Left cardiac atrium (tissue), 4 donors: ENCODE measurements at regions of chr3 and their contacts with region 1.

Region 1: GRCh38 chr3:197456261-197457091 is 99.3 kb downstream of the BDH1 start:
- DNase-seq: peak; percentile 94
- ATAC-seq: peak; percentile 94 to 96

Region 2: DNA sequence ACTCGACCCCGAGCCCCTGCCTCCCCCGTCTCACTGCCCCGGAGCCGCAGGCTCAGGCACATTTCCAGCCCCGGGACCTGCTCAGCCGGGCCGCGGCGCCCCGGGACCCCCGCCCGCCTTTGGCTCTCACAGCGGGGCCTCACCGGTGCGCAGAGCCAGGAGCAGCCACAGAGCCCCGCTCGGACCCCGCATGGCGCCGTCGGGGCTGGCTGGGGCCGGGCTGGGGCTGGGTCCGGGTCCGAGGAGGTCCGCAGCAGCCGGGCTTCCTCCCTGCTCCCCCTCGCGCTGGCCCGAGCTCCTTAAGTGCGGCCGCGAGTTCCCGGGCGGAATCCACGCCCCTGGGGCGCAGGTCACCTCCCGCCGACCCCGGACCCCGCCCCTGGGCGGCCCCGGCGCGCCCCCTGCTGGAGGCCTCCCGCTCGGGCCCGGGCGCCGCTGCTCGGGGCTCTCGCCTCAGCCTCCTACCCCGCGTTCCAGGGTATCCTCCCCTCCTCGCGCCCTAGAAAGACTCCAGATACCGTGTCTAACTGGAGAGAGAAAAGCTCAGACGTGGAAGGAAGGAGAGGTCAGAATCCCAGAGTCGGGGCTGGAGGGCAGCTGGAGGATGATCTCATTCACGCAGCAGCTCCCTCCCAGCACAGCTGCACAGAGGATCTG is 426.8 kb before region 1 on chr3 and contains the start of gene MELTF:
- intact Hi-C with region 1: no loop called
- DNase-seq: peak; percentile 72
- ATAC-seq: peak; percentile 67 to 73
- total RNA-seq, gene MELTF: 7.7 to 10.1 TPM

Region 3: DNA sequence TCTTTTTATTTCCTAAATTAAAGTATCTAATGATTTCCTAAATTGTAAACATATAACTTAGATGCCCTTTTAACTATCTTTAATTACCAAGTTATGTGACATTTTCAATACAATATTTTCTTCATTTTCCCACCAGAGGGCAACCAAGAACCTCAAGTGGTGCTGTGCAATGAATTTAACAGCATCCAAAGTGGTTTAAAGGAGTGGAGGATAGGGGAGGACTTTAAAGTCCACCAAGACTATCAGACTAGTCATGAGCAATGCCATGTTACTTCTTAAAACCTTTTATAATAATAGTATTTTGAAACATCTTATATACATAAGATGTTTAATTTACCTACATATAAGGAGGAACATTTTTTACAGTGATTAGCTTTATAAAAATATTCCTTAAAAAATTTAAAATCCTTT is 232.4 kb before region 1 on chr3:
- intact Hi-C with region 1: loop called in 1 of 2 experiments (anchors 10 kb)
- DNase-seq: no peak
- ATAC-seq: peak; percentile 41 to 50

Region 4: GRCh38 chr3:197256836-197257444 is 199.5 kb before region 1 on chr3:
- intact Hi-C with region 1: loop called (anchors 5 to 10 kb)
- DNase-seq: no peak
- ATAC-seq: no peak

Region 5: DNA sequence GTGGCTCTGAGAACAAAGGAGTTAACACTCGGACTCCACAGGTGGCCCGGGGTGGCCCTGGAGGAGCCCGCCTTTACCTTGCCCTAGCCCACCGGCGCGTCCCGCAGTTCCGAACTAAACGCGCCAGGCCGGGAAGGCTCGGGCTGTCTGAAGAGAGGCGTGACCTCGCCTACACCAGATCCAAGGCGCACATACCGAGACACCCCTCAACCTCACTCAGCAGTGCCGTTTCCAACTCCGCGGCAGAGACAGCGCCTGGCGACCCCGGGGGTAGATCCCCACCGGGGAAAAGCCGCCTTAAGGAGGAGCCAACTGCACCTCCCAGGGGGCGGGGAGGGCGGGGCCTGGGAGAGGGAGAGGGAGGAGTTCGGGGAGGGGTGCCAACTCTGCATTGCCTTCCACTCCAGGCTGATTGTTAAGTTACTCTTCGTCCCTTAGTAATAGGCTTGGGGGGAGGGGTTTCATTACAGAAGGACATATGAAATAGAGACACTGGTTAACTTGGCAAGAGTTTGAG is 158.1 kb before region 1 on chr3 and contains the start of gene DLG1:
- intact Hi-C with region 1: loop called in 1 of 2 experiments (anchors 5 kb)
- DNase-seq: peak; percentile 92
- ATAC-seq: peak; percentile 84 to 94
- total RNA-seq, gene DLG1: 44.1 to 59.0 TPM

Region 6: GRCh38 chr3:197331131-197331530 is 125.3 kb before region 1 on chr3:
- intact Hi-C with region 1: no loop called
- DNase-seq: no peak
- ATAC-seq: no peak